ENCODE measurements at regions of chr6 and their contacts with region 1.

Region 1: GRCh38 chr6:143427109-143427817 is 23.2 kb downstream of the ADAT2 start:
- DNase-seq: peak; percentile 55 to 73
- ATAC-seq: peak; percentile 84 to 91 (median 88)
- H3K4me3 ChIP-seq: no peak overlapping the region
- H3K27ac ChIP-seq: no peak overlapping the region
- H3K4me1 ChIP-seq: no peaks in the 10 kb centered on the region
- H3K27me3 ChIP-seq: no peaks in the 10 kb centered on the region
- CTCF ChIP-seq: peak; percentile 89

Region 2: GRCh38 chr6:142474531-142475289 is 952.6 kb before region 1 on chr6:
- intact Hi-C with region 1: loop called (anchors 5 kb)
- DNase-seq: no peak
- ATAC-seq: peak in 1 of 4 donors; percentile 64
- H3K4me3 ChIP-seq: no peak overlapping the region
- H3K27ac ChIP-seq: no peak overlapping the region
- H3K4me1 ChIP-seq: no peaks in the 10 kb centered on the region
- H3K27me3 ChIP-seq: no peaks in the 10 kb centered on the region
- CTCF ChIP-seq: peak; percentile 89

Region 3: DNA sequence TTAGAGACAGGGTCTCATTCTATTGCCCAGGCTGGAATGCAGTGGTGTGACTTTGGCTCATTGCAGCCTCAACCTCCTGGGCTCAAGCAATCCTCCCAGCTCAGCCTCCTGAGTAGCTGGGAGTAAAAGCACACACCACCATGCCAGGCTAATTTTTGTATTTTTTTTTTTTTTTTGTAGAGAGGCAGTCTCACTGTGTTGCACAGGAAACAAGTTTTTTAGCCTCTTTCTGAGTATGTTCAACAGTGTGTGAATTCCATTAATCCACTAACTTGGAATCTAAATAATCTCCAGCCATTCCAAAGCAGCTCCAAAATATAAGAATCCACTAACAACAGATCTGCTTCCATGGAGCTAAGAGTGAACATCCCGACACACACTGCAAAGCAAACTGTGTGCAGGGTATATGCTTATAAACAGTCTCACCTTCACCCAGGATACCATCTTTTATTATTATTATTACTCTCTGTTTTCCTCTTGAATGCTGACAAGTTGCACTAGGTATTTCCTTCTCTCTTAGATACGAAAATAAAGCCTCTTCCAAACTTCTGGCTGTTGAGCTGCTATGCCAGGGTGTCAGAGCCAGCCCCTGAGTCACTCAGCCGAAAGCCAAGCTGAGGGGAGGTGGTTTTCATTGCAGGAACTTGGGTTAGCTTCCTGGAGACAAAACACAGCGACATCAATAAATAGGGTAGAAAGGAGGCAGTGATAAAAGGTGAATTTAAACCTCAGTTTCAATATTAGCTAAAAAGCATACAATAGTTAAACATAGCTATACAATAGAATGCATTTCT is 747.2 kb before region 1 on chr6:
- intact Hi-C with region 1: loop called in 1 of 2 experiments (anchors 5 kb)
- DNase-seq: peak in 1 of 2 donors; percentile 34
- ATAC-seq: no peak
- H3K4me3 ChIP-seq: no peak overlapping the region
- H3K27ac ChIP-seq: no peak overlapping the region
- H3K4me1 ChIP-seq: no peaks in the 10 kb centered on the region
- H3K27me3 ChIP-seq: peaks cover 0 to 3% (median 0%) of the 10 kb centered on the region in 3 donors
- CTCF ChIP-seq: no peak

Region 4: DNA sequence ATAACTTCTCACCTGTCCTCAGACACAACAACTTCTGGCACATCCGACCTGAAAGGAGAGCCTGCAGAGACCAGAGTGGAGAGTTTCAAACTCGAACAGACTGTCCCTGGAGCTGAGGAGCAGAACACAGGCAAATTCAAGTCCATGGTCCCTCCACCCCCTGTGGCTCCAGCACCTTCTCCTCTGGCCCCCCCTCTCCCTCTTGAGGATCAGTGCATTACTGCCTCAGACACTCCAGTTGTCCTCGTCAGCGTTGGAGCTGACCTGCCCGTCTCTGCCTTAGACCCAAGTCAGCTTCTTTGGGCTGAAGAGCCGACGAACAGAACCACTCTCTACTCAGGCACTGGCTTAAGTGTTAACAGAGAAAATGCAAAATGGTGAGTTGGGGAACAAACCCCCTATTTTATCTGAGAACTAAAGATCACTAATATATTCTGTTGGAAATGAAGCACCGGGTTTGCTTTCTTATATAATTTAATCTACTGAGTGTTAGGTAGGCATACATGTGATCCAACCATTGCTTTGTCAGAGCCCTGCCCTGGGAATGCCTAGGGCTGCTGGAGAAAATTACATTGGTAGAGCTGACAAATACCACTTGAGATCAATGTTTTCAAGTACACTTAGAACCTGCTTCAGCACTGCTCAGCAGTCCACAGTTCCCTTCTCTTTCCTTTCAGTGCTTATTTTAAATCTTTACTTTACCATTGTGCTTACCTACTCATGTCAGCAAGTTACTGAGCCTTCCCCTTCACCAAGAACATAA is 338.3 kb after region 1 on chr6:
- intact Hi-C with region 1: no loop called
- DNase-seq: no peak
- ATAC-seq: no peak
- H3K4me3 ChIP-seq: no peak overlapping the region
- H3K27ac ChIP-seq: no peak overlapping the region
- H3K4me1 ChIP-seq: no peaks in the 10 kb centered on the region
- H3K27me3 ChIP-seq: no peaks in the 10 kb centered on the region
- CTCF ChIP-seq: no peak

Measured in psoas muscle (tissue), 8 donors.